ENCODE measurements at regions of chr3 and their contacts with region 1.

Region 1: DNA sequence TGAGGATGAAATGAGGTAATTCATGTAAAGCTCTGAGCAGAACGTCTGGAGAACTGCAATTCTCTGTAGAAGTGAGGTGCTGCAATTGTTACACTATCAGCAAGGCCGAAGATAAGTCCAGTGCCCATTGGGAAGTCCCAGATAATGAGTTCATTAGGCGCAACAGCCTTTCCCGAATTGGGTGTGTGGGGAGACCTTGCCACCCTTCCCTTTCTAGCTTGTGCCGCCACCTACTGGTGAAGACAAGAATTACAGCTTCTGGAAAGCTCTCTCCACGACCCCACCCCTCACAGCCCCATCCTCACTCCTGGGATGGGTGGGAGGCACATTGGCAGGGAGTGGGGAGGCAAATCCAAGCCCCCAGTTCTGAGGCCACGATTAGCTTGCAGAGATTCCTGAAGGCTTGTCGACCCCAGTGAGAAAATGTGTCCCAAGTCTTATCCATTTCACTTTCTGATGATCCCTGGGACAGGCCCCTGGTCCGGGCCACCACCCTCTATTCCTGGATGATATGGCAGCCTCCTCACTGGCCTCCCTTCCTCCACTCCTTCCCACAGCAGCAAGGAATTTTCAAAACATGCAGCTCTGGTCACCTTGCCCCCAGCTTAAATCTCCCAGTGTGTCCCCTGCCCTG is 36.4 kb downstream of the FAM3D start:
- DNase-seq: peak; percentile 28 to 71 (median 46)
- ATAC-seq: peak; percentile 60
- H3K4me3 ChIP-seq: no peak overlapping the region
- H3K4me3 Mint-ChIP-seq: no peak overlapping the region
- H3K27ac ChIP-seq: no peak overlapping the region
- H3K27ac Mint-ChIP-seq: no peak overlapping the region
- H3K4me1 ChIP-seq: peaks cover 3% of the 10 kb centered on the region
- H3K4me1 Mint-ChIP-seq: no peaks in the 10 kb centered on the region
- H3K27me3 ChIP-seq: peaks cover 0 to 4% of the 10 kb centered on the region in 2 experiments
- H3K27me3 Mint-ChIP-seq: no peaks in the 10 kb centered on the region
- CTCF ChIP-seq: peak; percentile 81

Region 2: GRCh38 chr3:58324391-58325390 is 305.5 kb before region 1 on chr3:
- CTCF ChIA-PET with region 1: no interaction called
- POLR2A ChIA-PET with region 1: no interaction called
- intact Hi-C with region 1: loop called (anchors 5 kb)
- DNase-seq: peak in 3 of 14 experiments; percentile 22 to 31 (median 22)
- ATAC-seq: peak; percentile 63
- H3K4me3 ChIP-seq: no peak overlapping the region
- H3K4me3 Mint-ChIP-seq: no peak overlapping the region
- H3K27ac ChIP-seq: no peak overlapping the region
- H3K27ac Mint-ChIP-seq: peak overlapping the region; percentile 81
- H3K4me1 ChIP-seq: peaks cover 9% of the 10 kb centered on the region
- H3K4me1 Mint-ChIP-seq: peaks cover 14% of the 10 kb centered on the region
- H3K27me3 ChIP-seq: no peaks in the 10 kb centered on the region
- H3K27me3 Mint-ChIP-seq: no peaks in the 10 kb centered on the region
- CTCF ChIP-seq: no peak

Region 3: GRCh38 chr3:58404396-58404795 is 225.8 kb before region 1 on chr3:
- CTCF ChIA-PET with region 1: no interaction called
- POLR2A ChIA-PET with region 1: no interaction called
- intact Hi-C with region 1: no loop called
- DNase-seq: no peak
- ATAC-seq: no peak
- H3K4me3 ChIP-seq: no peak overlapping the region
- H3K4me3 Mint-ChIP-seq: no peak overlapping the region
- H3K27ac ChIP-seq: no peak overlapping the region
- H3K27ac Mint-ChIP-seq: no peak overlapping the region
- H3K4me1 ChIP-seq: no peaks in the 10 kb centered on the region
- H3K4me1 Mint-ChIP-seq: no peaks in the 10 kb centered on the region
- H3K27me3 ChIP-seq: no peaks in the 10 kb centered on the region
- H3K27me3 Mint-ChIP-seq: no peaks in the 10 kb centered on the region
- CTCF ChIP-seq: no peak

Region 4: GRCh38 chr3:58463181-58463941 is 166.8 kb before region 1 on chr3:
- CTCF ChIA-PET with region 1: interaction called, 5 read pairs
- POLR2A ChIA-PET with region 1: no interaction called
- intact Hi-C with region 1: loop called in 1 of 2 experiments (anchors 5 kb)
- DNase-seq: peak; percentile 24 to 82 (median 62)
- ATAC-seq: peak; percentile 88
- H3K4me3 ChIP-seq: peak overlapping the region; percentile 1
- H3K4me3 Mint-ChIP-seq: peak overlapping the region; percentile 5
- H3K27ac ChIP-seq: no peak overlapping the region
- H3K27ac Mint-ChIP-seq: no peak overlapping the region
- H3K4me1 ChIP-seq: peaks cover 7% of the 10 kb centered on the region
- H3K4me1 Mint-ChIP-seq: peaks cover 8% of the 10 kb centered on the region
- H3K27me3 ChIP-seq: no peaks in the 10 kb centered on the region
- H3K27me3 Mint-ChIP-seq: no peaks in the 10 kb centered on the region
- CTCF ChIP-seq: peak; percentile 88

Region 5: DNA sequence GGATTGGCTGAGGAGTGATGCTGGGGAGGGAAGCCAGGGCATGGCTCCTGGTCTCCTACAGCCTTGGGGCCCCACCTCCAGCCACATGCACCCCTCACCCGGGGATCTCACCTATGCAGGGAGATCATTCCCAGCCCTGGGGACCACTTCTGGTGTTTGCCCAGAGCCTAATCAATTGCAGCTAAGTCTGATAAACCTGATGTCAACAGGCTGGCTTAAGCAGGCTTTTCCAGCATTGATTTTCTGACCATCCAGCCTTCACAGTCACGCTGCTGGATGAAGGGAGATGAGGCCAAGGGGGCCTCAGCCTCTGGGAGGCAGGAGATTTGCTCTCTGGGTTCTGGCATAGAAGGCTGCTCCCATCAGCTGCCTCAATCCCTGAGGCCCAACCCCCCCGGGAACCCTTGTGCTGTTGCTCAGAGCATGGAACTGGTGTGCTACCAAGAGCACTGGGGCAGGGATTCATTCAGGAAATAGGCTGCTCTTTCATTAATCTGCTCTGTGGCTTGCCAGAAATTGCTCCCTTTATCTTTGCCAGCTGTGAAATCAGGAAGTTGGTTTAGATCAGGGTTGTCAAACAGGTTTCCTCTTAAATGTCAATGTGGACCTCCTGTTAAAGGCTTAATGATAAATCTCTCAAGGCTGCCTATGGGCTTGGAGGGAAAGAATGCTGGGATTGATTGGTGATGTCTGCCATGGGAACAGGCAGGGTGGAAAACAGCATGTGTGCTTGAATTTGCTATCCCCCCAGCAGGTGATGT is 17.4 kb after region 1 on chr3:
- CTCF ChIA-PET with region 1: no interaction called
- POLR2A ChIA-PET with region 1: no interaction called
- intact Hi-C with region 1: no loop called
- DNase-seq: no peak
- ATAC-seq: no peak
- H3K4me3 ChIP-seq: no peak overlapping the region
- H3K4me3 Mint-ChIP-seq: no peak overlapping the region
- H3K27ac ChIP-seq: no peak overlapping the region
- H3K27ac Mint-ChIP-seq: no peak overlapping the region
- H3K4me1 ChIP-seq: no peaks in the 10 kb centered on the region
- H3K4me1 Mint-ChIP-seq: no peaks in the 10 kb centered on the region
- H3K27me3 ChIP-seq: peaks cover 0 to 3% of the 10 kb centered on the region in 2 experiments
- H3K27me3 Mint-ChIP-seq: no peaks in the 10 kb centered on the region
- CTCF ChIP-seq: no peak